Psoas muscle (tissue), 8 donors: ENCODE measurements at regions of chr15 and their contacts with region 1.

Region 1: GRCh38 chr15:67863442-67863987 is 23.7 kb upstream of the RNU6-1 start:
- DNase-seq: peak; percentile 82 to 90
- ATAC-seq: peak; percentile 95 to 98 (median 96)
- H3K4me3 ChIP-seq: peak overlapping the region; percentile 72
- H3K27ac ChIP-seq: no peak overlapping the region
- H3K4me1 ChIP-seq: peaks cover 3% of the 10 kb centered on the region
- H3K27me3 ChIP-seq: no peaks in the 10 kb centered on the region
- CTCF ChIP-seq: peak; percentile 96

Region 2: GRCh38 chr15:68053701-68054627 is 190.4 kb after region 1 on chr15 and contains the start of gene PIAS1:
- intact Hi-C with region 1: loop called in 1 of 2 experiments (anchors 10 kb)
- DNase-seq: peak; percentile 95 to 98
- ATAC-seq: peak; percentile 97 to 99 (median 98)
- H3K4me3 ChIP-seq: peak within 1 kb of the TSS; percentile 89
- H3K27ac ChIP-seq: peak within 1 kb of the TSS; percentile 90
- H3K4me1 ChIP-seq: peaks cover 32% of the 10 kb centered on the region
- H3K27me3 ChIP-seq: no peaks in the 10 kb centered on the region
- CTCF ChIP-seq: no peak
- total RNA-seq, gene PIAS1: 18.2 to 28.7 (median 20.8) TPM

Region 3: DNA sequence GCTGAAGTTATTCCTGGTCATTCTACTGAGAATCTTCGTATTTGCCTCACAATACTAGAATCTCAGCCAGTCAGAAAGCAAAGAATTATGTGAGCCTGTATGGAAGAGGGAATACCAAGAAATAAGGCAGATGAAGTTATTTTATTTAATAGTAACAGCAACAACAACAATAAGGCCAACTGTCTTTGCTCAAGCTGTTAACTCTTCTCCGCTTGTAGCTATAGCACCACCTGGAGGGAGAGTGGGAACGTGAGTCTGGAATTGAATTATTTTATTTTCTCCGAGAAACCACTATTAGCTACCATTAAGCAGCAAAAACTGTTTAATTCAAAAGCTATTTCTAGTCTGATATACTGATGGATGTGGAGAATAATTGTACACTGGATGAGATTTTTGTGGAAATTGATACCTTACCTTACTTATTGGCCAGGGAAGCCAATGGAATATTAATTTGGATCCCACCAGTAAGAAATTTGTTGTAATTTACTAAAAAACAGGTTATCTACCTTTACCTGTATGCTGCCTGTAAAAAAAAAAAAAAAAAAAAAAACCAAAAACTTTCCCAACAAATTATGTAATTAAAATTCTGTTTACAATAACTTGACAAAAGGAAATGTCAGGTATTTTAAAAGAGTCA is 291.5 kb after region 1 on chr15:
- intact Hi-C with region 1: loop called (anchors 1 to 2 kb)
- DNase-seq: no peak
- ATAC-seq: peak in 2 of 4 donors; percentile 63 to 80
- H3K4me3 ChIP-seq: no peak overlapping the region
- H3K27ac ChIP-seq: no peak overlapping the region
- H3K4me1 ChIP-seq: no peaks in the 10 kb centered on the region
- H3K27me3 ChIP-seq: no peaks in the 10 kb centered on the region
- CTCF ChIP-seq: peak; percentile 73

Region 4: DNA sequence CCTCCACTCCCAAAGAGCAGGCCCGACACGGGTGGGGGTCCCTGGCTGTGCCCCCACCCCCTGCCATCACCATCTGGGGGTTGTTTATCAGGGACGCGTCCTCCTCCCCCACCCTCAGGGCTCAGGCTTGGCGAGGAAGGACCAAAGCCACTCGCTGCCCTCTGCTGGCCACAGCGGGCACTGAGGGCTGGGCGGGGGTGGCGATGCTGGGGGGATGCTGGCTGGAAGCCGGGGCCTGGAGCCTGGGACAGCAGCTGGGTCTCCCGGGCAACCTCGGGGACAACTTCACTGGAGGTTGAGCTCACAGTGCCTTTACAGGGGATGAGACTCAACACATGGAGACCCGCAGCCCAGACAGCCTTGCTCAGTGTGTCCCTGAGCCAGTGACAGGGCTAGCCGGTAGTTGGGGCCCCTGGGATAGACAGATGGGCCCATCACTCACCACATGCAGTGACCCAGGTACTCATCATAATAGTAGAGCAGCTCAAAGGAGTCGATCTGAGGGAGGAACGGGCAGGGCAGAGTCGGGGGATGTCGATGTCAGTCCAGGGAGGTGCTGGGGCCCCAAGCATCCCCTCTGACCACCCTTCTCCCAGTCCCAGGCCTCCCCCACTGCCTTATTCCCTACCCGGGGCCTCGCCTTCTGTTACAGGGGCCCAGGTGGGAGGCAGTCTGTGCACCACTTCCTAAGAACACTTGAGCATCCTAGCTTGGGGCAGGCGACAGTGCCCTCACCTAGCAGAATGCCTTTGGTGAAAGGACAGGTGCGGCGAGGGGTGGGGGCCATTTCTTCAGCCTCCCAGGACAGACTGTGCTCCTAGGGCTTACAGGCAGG is 347.5 kb after region 1 on chr15:
- intact Hi-C with region 1: loop called in 1 of 2 experiments (anchors 5 kb)
- DNase-seq: peak; percentile 75 to 81
- ATAC-seq: peak; percentile 68 to 89 (median 72)
- H3K4me3 ChIP-seq: no peak overlapping the region
- H3K27ac ChIP-seq: no peak overlapping the region
- H3K4me1 ChIP-seq: no peaks in the 10 kb centered on the region
- H3K27me3 ChIP-seq: no peaks in the 10 kb centered on the region
- CTCF ChIP-seq: peak; percentile 78